HAP-1 (cell line): ENCODE measurements at regions of chr12 and their contacts with region 1.

Region 1: DNA sequence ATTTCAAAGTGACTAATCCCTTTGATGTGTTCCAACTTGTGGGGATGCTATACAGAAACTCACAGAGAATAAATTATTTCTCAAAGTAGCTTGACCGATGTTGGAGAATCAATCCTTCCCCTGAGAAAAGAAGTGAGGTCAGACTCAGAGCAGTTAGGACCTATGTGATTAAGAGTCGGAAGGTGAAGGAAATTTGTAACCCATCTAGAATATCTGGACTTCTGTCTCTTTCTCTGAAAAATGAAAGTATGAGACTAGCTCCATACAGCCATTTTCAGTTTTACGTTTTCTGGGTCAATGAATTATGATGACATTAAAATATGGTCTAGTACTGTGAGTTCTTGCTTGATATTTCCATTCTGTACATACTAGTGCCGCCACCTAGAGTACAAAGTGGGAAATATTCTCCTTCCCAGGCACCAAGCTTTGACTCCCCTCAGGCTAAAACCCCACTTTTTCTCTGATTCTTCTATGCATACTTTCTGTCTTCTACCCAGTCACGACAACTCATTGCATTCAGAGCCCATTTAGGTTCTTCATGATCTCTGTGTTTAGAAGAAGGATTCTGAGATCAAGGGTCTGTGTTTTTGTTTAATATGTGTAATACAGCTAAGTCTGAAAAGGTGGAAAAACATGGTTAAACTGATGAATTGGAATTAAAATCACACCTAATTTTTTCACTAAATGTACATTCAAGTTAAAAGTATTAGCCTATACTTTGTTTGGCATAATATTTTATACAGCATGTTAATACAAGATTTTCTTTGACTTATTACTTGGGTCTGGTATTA is 6.9 kb upstream of the NTS start:
- DNase-seq: peak; percentile 47 to 50
- H3K4me3 ChIP-seq: no peak overlapping the region
- H3K4me1 ChIP-seq: 0 out of 2 replicates have a peak, but pooled peaks cover 2% of the 10 kb centered on the region
- H3K27me3 ChIP-seq: peaks cover 8% of the 10 kb centered on the region

Region 2: DNA sequence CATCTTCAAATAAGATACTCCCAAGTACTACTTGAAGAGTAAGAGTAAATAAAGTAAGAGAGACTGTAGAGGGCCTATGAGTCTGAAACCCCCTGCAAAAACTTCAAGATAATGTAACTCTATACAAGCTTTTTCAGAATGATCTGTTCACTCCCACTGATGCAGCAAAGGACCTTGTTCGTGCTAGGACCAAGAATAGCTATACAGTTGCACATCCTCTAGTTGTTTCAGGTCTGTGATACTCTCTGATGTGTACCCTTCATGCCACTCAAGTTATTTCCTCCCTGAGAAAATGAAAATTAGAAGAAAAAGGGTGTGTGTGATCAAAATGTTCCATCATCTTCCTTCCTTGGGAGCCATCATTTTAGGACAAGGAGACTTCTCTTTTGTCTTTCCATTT is 382.8 kb before region 1 on chr12:
- in situ Hi-C with region 1: loop called (anchors 25 kb)
- DNase-seq: no peak
- H3K4me3 ChIP-seq: no peak overlapping the region
- H3K4me1 ChIP-seq: no peaks in the 10 kb centered on the region
- H3K27me3 ChIP-seq: peaks cover 3% of the 10 kb centered on the region; the same call in 1 of the 2 replicates

Region 3: DNA sequence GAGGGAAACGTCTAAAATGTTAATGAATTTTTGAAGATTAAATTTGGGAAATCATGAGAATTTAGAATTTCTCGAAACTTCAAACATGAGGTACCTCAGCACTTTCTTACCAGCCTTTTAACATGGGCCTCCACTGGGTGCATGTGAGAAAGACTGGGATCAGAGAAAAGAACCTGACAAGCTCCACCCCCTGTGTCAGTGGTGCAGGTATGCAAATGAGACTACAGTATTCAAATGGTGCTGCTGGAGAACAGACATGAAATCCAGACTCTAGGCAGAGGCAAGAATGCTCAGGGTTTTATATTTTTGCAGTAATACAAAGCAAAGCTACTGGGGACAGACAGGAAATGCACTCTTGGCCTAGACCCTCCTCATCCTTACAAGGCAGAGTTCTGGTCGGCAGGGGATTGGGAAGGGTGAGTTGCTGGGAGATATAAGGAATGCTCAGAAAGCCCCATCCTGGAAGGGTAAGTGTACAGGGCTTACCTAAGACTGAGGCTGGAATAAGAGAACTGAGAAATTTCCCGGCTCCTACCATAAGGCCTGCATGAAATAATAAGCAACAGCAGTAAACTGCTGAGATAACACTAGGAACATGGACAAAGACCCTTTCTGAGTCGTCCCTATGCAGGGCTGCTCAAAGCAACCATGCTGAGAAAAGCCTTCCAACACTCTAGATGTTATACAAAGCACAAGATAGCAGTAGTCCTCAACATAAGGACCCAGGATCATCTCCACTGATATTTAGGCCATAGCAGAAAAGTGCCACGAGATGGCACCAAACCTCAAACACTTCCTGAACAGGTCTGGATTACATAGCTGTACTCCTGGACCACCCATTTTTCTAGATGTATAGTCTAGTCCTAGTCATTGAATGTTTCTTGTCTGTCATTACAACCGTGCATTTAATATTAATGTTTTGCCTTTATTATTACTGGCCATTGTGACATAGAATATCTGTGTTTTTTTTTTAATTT is 291.8 kb before region 1 on chr12:
- in situ Hi-C with region 1: loop called (anchors 5 kb)
- DNase-seq: peak; percentile 46 to 64
- H3K4me3 ChIP-seq: no peak overlapping the region
- H3K4me1 ChIP-seq: no peaks in the 10 kb centered on the region
- H3K27me3 ChIP-seq: peaks cover 5% of the 10 kb centered on the region